ENCODE measurements at regions of chr7 and their contacts with region 1.

Region 1: GRCh38 chr7:137241655-137242360 is 101.7 kb downstream of the PTN start:
- DNase-seq: no peak
- H3K4me3 Mint-ChIP-seq: no peak overlapping the region
- H3K27ac Mint-ChIP-seq: no peak overlapping the region
- H3K4me1 Mint-ChIP-seq: no peaks in the 10 kb centered on the region
- H3K27me3 Mint-ChIP-seq: no peaks in the 10 kb centered on the region
- CTCF ChIP-seq: no peak

Region 2: DNA sequence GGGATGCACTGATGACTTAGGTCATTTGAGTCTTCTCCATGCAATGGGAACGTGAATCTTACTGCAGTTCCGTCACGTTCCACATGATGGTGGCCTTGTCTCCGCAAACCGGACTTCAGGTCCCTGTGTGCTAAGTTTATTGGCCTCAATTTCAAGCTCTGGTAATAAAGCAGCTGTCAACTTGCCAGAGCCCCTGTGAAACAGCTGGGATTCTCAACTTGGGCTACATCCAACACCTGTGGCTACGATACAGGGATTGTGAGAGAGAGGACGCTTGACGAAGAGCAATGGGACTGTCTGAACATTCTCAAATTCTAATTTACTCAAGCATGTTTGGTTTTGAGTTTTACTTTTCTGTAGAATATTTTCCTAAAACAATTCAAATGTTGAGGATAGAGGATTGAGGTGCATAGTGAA is 72.5 kb before region 1 on chr7:
- CTCF ChIA-PET with region 1: interaction called, 11 read pairs
- intact Hi-C with region 1: no loop called
- DNase-seq: peak; percentile 29
- H3K4me3 Mint-ChIP-seq: no peak overlapping the region
- H3K27ac Mint-ChIP-seq: no peak overlapping the region
- H3K4me1 Mint-ChIP-seq: no peaks in the 10 kb centered on the region
- H3K27me3 Mint-ChIP-seq: no peaks in the 10 kb centered on the region
- CTCF ChIP-seq: peak; percentile 14

Region 3: DNA sequence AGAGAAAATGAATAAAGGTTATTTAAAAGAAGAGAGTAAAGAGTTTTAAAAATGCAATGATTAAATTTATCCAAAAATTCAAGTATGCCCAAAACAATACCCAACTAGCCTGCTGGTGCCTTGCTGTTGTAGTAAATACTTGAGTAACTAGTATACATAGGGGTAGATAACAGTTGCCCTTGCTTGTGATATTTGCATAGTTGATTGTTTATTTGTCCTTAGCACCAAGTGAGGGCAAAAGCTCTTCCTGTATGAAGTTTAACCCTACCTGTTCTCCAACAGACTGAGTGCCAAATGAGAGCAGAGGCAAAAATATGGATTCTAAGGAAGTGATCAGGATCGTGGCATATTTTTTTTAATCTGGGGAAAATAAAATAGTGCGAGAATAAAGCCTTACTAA is 16.7 kb after region 1 on chr7:
- CTCF ChIA-PET with region 1: interaction called, 11 read pairs
- intact Hi-C with region 1: no loop called
- DNase-seq: no peak
- H3K4me3 Mint-ChIP-seq: no peak overlapping the region
- H3K27ac Mint-ChIP-seq: no peak overlapping the region
- H3K4me1 Mint-ChIP-seq: no peaks in the 10 kb centered on the region
- H3K27me3 Mint-ChIP-seq: no peaks in the 10 kb centered on the region
- CTCF ChIP-seq: no peak

Measured in Calu3 (cell line).